Activated B cell treated with CpG ODN at 0.5 μM for 24 hours (primary cell): ENCODE measurements at regions of chr11 and their contacts with region 1.

Region 1: DNA sequence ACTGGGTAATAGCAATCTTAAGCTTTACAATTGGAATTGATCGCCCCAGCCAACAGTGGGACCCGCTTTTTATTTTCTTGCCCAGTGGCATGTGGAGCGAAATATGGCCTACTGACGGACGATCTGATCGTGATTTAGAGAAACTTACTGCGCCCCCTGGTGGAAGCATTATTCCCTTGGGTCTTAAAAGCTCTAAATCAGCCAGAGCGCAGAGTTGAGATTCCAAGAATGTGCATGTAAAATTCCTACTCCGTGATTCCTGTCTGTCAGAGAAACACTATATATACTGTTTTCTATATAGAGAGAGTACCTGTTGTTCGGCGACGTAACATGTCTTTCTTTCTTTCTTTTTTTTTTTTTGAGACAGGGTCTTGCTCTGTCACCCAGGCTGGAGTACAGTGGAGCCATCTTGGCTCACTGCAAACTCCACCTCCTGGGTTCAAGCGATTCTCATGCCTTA is 3.7 kb upstream of the DPF2 start:
- DNase-seq: peak; percentile 56
- ATAC-seq: peak; percentile 43
- H3K4me3 Mint-ChIP-seq: peak overlapping the region; percentile 78
- H3K27ac Mint-ChIP-seq: peak overlapping the region; percentile 96
- H3K4me1 Mint-ChIP-seq: peaks cover 24% of the 10 kb centered on the region
- H3K27me3 Mint-ChIP-seq: no peaks in the 10 kb centered on the region
- CTCF ChIP-seq: no peak

Region 2: DNA sequence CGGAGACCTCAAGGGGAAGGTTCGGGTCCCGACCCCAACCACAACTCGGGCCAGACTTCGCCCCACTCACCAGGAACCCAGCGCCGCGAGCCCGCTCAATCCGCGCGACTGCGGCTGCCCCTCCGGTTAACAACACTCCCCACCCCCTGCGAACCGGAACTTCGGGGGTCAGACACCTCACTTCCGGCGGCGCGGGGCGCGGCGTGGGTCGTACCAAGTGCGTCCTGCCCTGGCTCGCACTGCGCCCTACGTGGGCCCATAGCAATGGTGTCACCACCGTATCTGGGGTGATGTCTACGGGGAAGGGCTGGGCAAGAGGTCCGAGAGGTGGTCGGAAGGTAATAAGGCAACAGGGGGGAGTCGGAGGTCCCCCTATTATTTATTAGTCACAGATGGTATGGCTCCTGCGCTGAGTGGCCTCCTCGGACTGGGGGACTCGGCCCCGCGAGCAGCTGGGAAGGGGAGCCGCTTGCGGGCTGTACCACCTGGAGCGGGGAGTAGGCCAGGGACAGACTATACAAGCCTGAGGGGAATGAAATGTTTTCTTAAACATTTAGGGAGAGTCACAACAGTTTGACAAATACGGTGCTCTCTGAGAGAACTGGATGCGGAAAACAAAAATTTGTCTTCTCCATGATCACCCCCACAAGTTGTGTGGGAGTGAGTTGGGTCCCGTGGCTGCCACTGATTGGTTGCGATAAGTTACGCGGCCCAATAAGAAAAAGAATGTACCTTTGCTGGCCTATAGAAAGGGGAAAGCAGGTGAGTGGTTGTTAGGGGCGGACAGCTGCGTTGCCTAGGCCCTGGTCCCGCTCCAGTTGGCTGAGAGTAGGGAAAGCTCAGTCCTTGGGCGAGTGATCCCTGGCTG is 195.4 kb before region 1 on chr11 and contains the start of gene SYVN1:
- CTCF ChIA-PET with region 1: no interaction called
- POLR2A ChIA-PET with region 1: interaction called, 7 read pairs
- intact Hi-C with region 1: loop called (anchors 5 kb)
- DNase-seq: peak; percentile 92
- ATAC-seq: peak; percentile 60
- H3K4me3 Mint-ChIP-seq: peak within 1 kb of the TSS; percentile 99
- H3K27ac Mint-ChIP-seq: peak within 1 kb of the TSS; percentile 99
- H3K4me1 Mint-ChIP-seq: peaks cover 64% of the 10 kb centered on the region
- H3K27me3 Mint-ChIP-seq: no peaks in the 10 kb centered on the region
- CTCF ChIP-seq: no peak
- total RNA-seq, gene SYVN1: 232 and 238 TPM in 2 replicates

Region 3: DNA sequence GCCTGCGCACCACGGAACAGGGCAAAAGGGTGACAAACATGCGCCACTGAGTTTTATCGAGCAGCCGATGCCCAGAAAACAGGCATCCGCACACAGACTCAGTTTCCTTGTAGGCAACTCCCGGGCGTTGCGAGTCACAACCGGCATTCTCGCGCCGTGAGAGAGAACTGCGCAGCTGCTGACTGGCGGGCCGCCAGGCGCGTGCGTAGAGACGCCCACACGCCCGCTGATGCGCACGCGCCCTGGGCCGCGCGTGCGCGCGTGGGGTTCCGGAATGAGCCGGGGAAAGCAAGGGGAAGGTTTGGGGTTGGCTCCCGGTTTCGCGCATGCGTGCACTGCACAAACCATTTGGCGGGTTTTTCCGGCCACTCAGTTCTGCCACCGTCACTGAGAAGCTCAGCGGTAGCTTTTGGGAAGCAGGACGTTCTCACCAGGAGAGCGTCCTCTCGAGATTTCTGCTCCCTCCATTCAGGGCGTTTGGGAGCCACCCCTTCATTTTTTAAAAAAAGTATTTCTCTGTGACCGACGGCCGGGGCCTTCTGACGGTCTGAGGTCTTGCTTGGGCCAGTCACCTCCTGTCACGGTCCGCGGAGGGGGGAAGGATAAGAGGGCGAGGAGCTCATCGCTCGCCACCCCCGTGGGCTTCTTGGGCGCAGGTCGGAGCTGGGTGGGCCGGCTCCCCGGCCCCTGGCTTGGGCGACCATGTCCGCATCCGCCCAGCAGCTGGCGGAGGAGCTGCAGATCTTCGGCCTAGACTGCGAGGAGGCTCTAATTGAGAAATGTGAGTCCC is 68.2 kb before region 1 on chr11 and contains the start of gene POLA2:
- CTCF ChIA-PET with region 1: interaction called, 10 read pairs
- POLR2A ChIA-PET with region 1: interaction called, 24 read pairs
- intact Hi-C with region 1: loop called (anchors 5 kb)
- DNase-seq: peak; percentile 98
- ATAC-seq: peak; percentile 83
- H3K4me3 Mint-ChIP-seq: peak within 1 kb of the TSS; percentile 90
- H3K27ac Mint-ChIP-seq: peak within 1 kb of the TSS; percentile 91
- H3K4me1 Mint-ChIP-seq: peaks cover 27% of the 10 kb centered on the region
- H3K27me3 Mint-ChIP-seq: no peaks in the 10 kb centered on the region
- CTCF ChIP-seq: no peak
- total RNA-seq, gene POLA2: 37.1 and 43.4 TPM in 2 replicates

Region 4: GRCh38 chr11:65314501-65315203 is 15.3 kb before region 1 on chr11 and contains the start of gene CDC42EP2:
- CTCF ChIA-PET with region 1: interaction called, 110 read pairs
- POLR2A ChIA-PET with region 1: interaction called, 16 read pairs
- intact Hi-C with region 1: loop called (anchors 1 kb)
- DNase-seq: peak; percentile 79
- ATAC-seq: peak; percentile 95
- H3K4me3 Mint-ChIP-seq: peak within 1 kb of the TSS; percentile 83
- H3K27ac Mint-ChIP-seq: no peak within 1 kb of the TSS
- H3K4me1 Mint-ChIP-seq: peaks cover 5% of the 10 kb centered on the region
- H3K27me3 Mint-ChIP-seq: peaks cover 8% of the 10 kb centered on the region
- CTCF ChIP-seq: no peak
- total RNA-seq, gene CDC42EP2: 0.18 and 0.83 TPM in 2 replicates

Region 5: DNA sequence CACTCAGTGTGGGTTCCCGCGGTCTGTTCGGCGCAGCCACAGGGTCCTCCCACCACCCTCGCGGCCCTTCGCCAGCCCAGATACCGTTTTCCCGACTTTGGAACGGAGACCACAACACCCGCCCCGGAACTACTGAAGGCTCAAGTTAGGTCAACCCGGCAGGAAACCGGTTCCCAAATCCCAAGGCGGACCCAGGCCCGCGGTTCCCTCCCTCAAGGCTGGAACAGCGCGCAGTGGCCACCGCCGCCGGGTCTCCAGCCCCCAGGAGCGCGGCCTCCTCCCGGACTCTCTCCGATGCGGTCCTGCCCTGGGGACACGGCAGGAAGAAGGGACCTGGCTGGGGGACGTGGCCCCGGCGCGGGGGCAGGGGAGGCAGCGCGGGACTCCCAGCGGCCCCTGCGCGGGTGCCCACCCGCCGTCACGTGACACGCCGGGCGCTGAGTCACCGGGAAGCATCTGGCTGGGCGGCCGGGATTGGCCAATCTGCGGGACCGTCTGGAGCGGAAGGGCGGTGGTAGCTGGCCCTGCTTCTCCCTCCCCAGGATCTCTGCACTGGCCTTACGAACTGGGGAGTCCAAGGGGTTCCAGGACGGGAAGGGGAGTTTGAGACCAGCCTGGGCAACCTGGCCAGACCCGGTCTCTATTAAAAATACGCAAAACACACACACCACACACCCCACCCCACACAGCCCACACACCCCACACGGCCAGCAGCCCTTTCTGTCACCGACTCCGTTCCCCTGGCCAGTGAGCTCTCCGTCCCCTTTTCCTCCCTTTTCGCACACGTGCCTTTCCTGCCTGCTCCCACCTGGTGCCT is 147.4 kb after region 1 on chr11:
- CTCF ChIA-PET with region 1: no interaction called
- POLR2A ChIA-PET with region 1: interaction called, 4 read pairs
- intact Hi-C with region 1: loop called (anchors 1 kb)
- DNase-seq: peak; percentile 92
- ATAC-seq: peak; percentile 86
- H3K4me3 Mint-ChIP-seq: peak overlapping the region; percentile 96
- H3K27ac Mint-ChIP-seq: peak overlapping the region; percentile 99
- H3K4me1 Mint-ChIP-seq: peaks cover 24% of the 10 kb centered on the region
- H3K27me3 Mint-ChIP-seq: no peaks in the 10 kb centered on the region
- CTCF ChIP-seq: no peak

Region 6: GRCh38 chr11:65595543-65596281 is 265.7 kb after region 1 on chr11 and contains the start of gene KCNK7:
- CTCF ChIA-PET with region 1: no interaction called
- POLR2A ChIA-PET with region 1: no interaction called
- intact Hi-C with region 1: no loop called
- DNase-seq: no peak
- ATAC-seq: no peak
- H3K4me3 Mint-ChIP-seq: no peak within 1 kb of the TSS
- H3K27ac Mint-ChIP-seq: peak within 1 kb of the TSS; percentile 7
- H3K4me1 Mint-ChIP-seq: peaks cover 14% of the 10 kb centered on the region
- H3K27me3 Mint-ChIP-seq: no peaks in the 10 kb centered on the region
- CTCF ChIP-seq: no peak
- total RNA-seq, gene KCNK7: 1.0 and 1.1 TPM in 2 replicates